HCT116 (cell line): ENCODE measurements at regions of chr7 and their contacts with region 1.

Region 1: GRCh38 chr7:123367484-123368122 is 166.8 kb downstream of the IQUB start:
- DNase-seq: peak; percentile 45
- ATAC-seq: peak; percentile 96
- H3K4me3 ChIP-seq: no peak overlapping the region
- H3K27ac ChIP-seq: no peak overlapping the region
- H3K4me1 ChIP-seq: no peaks in the 10 kb centered on the region
- H3K27me3 ChIP-seq: no peaks in the 10 kb centered on the region
- CTCF ChIP-seq: peak; percentile 67 to 76 (median 72); a peak in 5 of 6 replicates
- POLR2A ChIP-seq: no peak
- RAD21 ChIP-seq: peak; percentile 84

Region 2: GRCh38 chr7:122896509-122896908 is 471.1 kb before region 1 on chr7:
- CTCF ChIA-PET with region 1: no interaction called
- POLR2A ChIA-PET with region 1: no interaction called
- RAD21 ChIA-PET with region 1: no interaction called
- intact Hi-C with region 1: loop called (anchors 10 kb)
- DNase-seq: no peak
- ATAC-seq: no peak
- H3K4me3 ChIP-seq: no peak overlapping the region
- H3K27ac ChIP-seq: no peak overlapping the region
- H3K4me1 ChIP-seq: no peaks in the 10 kb centered on the region
- H3K27me3 ChIP-seq: no peaks in the 10 kb centered on the region
- CTCF ChIP-seq: peak in 1 of 3 experiments; percentile 39; a peak in 2 of 6 replicates
- POLR2A ChIP-seq: no peak
- RAD21 ChIP-seq: peak; percentile 50

Region 3: DNA sequence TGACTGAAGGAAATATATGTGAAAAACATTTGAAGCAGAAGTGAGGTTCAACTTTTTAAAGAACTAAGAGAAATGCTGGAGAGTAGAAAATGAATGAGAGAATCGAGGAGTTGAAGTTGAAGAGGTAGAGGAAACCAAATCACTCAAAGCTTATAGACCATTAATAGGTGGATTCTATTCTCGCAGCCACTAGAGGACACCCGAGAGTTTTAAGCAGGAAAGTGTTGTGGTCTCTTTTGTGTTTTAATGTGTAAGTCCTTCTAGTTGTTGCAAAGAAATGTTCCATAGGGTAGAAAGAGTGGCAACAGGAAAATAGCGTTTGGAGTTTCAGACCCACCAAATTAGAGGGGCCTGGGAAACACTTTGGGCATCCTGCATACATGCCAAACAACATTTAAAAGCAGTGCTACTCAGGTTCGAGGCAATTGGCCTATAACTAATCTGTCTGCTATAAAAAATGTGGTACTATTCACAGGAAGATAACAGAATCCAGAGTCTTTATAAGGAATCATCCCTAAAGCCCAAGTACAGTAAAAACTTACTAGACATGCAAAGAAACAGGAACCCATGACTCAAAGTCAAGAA is 296.8 kb before region 1 on chr7:
- CTCF ChIA-PET with region 1: interaction called, 8 read pairs
- POLR2A ChIA-PET with region 1: no interaction called
- RAD21 ChIA-PET with region 1: no interaction called
- intact Hi-C with region 1: loop called (anchors 2 kb)
- DNase-seq: peak; percentile 32
- ATAC-seq: peak; percentile 80
- H3K4me3 ChIP-seq: no peak overlapping the region
- H3K27ac ChIP-seq: no peak overlapping the region
- H3K4me1 ChIP-seq: no peaks in the 10 kb centered on the region
- H3K27me3 ChIP-seq: no peaks in the 10 kb centered on the region
- CTCF ChIP-seq: peak; percentile 46 to 75 (median 69); a peak in 5 of 6 replicates
- POLR2A ChIP-seq: no peak
- RAD21 ChIP-seq: peak; percentile 72

Region 4: DNA sequence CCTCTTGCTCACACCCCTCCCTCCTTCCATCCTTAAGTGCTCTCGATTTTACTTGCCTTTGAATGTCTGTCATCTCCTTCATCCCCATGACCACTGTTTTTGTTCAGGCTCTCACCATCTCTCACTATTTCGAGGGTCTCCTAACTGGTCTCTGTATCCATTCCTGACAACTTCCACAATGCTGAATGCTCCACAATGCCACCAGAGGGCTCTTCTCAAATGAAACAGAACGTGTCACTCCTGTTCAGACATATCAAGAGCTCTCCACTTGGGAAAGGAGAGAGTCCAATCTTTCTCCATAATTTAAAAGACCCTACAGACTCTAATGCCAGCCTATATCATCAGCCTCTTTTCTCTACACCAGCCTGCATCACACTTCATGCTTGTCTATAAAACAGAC is 158.8 kb before region 1 on chr7:
- CTCF ChIA-PET with region 1: interaction called, 56 read pairs
- POLR2A ChIA-PET with region 1: interaction called, 3 read pairs
- RAD21 ChIA-PET with region 1: interaction called, 6 to 9 read pairs
- intact Hi-C with region 1: loop called (anchors 1 kb)
- DNase-seq: peak; percentile 6
- ATAC-seq: peak; percentile 84
- H3K4me3 ChIP-seq: no peak overlapping the region
- H3K27ac ChIP-seq: no peak overlapping the region
- H3K4me1 ChIP-seq: no peaks in the 10 kb centered on the region
- H3K27me3 ChIP-seq: no peaks in the 10 kb centered on the region
- CTCF ChIP-seq: peak; percentile 24 to 63 (median 55); a peak in 4 of 6 replicates
- POLR2A ChIP-seq: no peak
- RAD21 ChIP-seq: peak; percentile 43

Region 5: DNA sequence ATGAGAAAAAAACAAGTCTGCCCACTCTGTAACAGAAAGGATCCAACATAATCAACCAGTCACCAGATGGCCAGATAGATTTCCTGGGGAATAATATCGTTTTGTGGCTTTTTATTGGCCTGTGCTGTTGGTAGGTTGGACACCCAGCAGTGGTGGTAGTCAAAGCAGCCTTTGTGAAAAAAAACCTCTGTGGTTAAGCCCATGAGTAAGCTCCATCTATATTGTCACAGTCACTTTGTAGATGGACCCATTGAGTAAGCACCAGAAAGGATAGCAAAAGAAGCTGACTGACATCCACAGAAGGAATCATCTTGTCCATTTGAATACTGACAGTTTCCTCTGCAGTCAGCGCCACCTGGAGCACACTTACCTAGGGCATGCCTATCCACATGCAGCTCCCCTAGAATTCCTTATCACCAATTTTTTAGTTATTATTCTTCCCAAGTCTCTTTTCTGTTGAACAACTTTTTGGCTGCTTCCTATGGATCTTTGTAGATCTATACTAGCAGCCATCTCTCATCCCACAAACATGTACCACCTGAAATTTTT is 69.9 kb after region 1 on chr7:
- CTCF ChIA-PET with region 1: no interaction called
- POLR2A ChIA-PET with region 1: no interaction called
- RAD21 ChIA-PET with region 1: no interaction called
- intact Hi-C with region 1: loop called (anchors 10 kb)
- DNase-seq: no peak
- ATAC-seq: peak; percentile 59; the same call in 1 of the 2 replicates
- H3K4me3 ChIP-seq: no peak overlapping the region
- H3K27ac ChIP-seq: no peak overlapping the region
- H3K4me1 ChIP-seq: no peaks in the 10 kb centered on the region
- H3K27me3 ChIP-seq: no peaks in the 10 kb centered on the region
- CTCF ChIP-seq: no peak
- POLR2A ChIP-seq: no peak
- RAD21 ChIP-seq: no peak

Region 6: GRCh38 chr7:123460616-123461015 is 93.0 kb after region 1 on chr7:
- CTCF ChIA-PET with region 1: no interaction called
- POLR2A ChIA-PET with region 1: no interaction called
- RAD21 ChIA-PET with region 1: no interaction called
- intact Hi-C with region 1: no loop called
- DNase-seq: no peak
- ATAC-seq: no peak
- H3K4me3 ChIP-seq: no peak overlapping the region
- H3K27ac ChIP-seq: no peak overlapping the region
- H3K4me1 ChIP-seq: no peaks in the 10 kb centered on the region
- H3K27me3 ChIP-seq: no peaks in the 10 kb centered on the region
- CTCF ChIP-seq: no peak
- POLR2A ChIP-seq: no peak
- RAD21 ChIP-seq: no peak

Region 7: DNA sequence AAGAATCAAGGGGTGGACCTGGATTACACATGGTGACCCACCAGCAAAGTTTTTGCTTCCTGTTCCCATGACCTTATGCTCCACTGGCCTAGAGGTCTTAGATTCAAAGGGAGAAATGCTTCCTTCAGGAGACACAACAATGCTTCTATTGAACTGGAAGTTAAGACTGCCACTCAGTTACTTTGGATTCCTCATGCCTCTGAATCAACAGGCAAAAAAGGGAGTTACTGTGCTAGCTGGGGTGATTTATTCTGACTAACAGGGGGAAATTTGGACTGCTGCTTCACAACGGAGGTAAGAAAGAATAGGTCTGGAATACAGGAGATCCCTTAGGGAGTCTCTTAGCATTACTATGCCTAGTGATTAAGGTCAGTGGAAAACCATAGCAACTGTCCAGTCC is 654.9 kb after region 1 on chr7:
- CTCF ChIA-PET with region 1: no interaction called
- POLR2A ChIA-PET with region 1: no interaction called
- RAD21 ChIA-PET with region 1: no interaction called
- intact Hi-C with region 1: no loop called
- DNase-seq: no peak
- ATAC-seq: no peak
- H3K4me3 ChIP-seq: no peak overlapping the region
- H3K27ac ChIP-seq: no peak overlapping the region
- H3K4me1 ChIP-seq: no peaks in the 10 kb centered on the region
- H3K27me3 ChIP-seq: no peaks in the 10 kb centered on the region
- CTCF ChIP-seq: no peak
- POLR2A ChIP-seq: no peak
- RAD21 ChIP-seq: no peak